HepG2 (cell line): ENCODE measurements at regions of chr17 and their contacts with region 1.

Region 1: GRCh38 chr17:59619293-59620063 is at the start of gene CLTC:
- DNase-seq: peak; percentile 97
- ATAC-seq: peak; percentile 95
- H3K4me3 ChIP-seq: peak within 1 kb of the TSS; percentile 94 to 99 (median 94)
- H3K27ac ChIP-seq: peak within 1 kb of the TSS; percentile 97
- H3K4me1 ChIP-seq: peaks cover 47% of the 10 kb centered on the region
- H3K27me3 ChIP-seq: no peaks in the 10 kb centered on the region; a peak in 2 of 5 replicates
- CTCF ChIP-seq: peak; percentile 21; the same call in 1 of the 2 replicates
- EP300 ChIP-seq: peak; percentile 64 to 84
- POLR2A ChIP-seq: peak; percentile 78 to 97
- RAD21 ChIP-seq: peak; percentile 44
- total RNA-seq, gene CLTC: 283 and 643 TPM in 2 replicates

Region 2: GRCh38 chr17:59199398-59199797 is 420.1 kb before region 1 on chr17:
- CTCF ChIA-PET with region 1: no interaction called
- POLR2A ChIA-PET with region 1: no interaction called
- in situ Hi-C with region 1: no loop called
- intact Hi-C with region 1: no loop called
- DNase-seq: no peak
- ATAC-seq: no peak
- H3K4me3 ChIP-seq: no peak overlapping the region
- H3K27ac ChIP-seq: no peak overlapping the region
- H3K4me1 ChIP-seq: no peaks in the 10 kb centered on the region
- H3K27me3 ChIP-seq: no peaks in the 10 kb centered on the region
- CTCF ChIP-seq: no peak
- EP300 ChIP-seq: no peak
- POLR2A ChIP-seq: no peak
- RAD21 ChIP-seq: no peak

Region 3: DNA sequence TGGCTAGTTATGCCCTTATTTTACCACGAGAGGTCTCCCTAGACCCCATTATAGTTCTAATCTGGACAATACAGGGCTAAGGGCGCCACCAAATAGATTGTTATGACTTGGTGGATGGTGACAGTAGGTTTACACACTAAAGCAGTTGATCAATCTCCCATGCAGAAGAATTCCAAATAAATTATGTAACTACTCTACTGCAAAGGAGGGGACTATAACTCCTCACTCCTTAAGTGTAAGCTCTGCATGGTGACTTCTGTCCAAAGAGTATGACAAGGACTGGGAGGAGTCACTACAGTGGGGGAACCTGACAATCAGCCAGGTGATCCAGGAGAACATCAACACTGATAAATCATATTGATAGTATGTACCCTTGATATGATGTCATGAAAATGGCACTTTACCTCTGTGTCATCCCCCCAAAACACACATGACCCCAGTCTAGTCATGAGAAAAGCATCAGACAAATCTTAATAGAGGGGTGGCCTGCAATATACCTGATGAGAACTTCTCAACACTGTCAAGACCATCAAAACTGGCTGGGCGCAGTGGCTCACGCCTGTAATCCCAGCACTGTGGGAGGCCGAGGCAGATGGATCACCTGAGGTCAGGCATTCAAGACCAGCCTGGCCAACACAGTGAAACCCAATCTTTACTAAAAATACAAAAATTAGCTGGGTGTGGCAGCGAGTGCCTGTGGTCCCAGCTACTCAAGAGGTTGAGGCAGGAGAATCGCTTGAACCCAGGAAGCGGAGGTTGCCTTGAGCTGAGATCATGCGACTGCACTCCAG is 308.2 kb before region 1 on chr17:
- CTCF ChIA-PET with region 1: no interaction called
- POLR2A ChIA-PET with region 1: interaction called, 10 read pairs
- in situ Hi-C with region 1: no loop called
- intact Hi-C with region 1: no loop called
- DNase-seq: peak; percentile 79
- ATAC-seq: peak; percentile 89
- H3K4me3 ChIP-seq: no peak overlapping the region
- H3K27ac ChIP-seq: no peak overlapping the region
- H3K4me1 ChIP-seq: peaks cover 31% of the 10 kb centered on the region
- H3K27me3 ChIP-seq: no peaks in the 10 kb centered on the region; a peak in 1 of 5 replicates
- CTCF ChIP-seq: peak; percentile 95
- EP300 ChIP-seq: 0 out of 4 replicates have a peak, but pooled peaks of 1 of the 2 experiments have one; percentile 14
- POLR2A ChIP-seq: no peak
- RAD21 ChIP-seq: peak; percentile 95

Region 4: DNA sequence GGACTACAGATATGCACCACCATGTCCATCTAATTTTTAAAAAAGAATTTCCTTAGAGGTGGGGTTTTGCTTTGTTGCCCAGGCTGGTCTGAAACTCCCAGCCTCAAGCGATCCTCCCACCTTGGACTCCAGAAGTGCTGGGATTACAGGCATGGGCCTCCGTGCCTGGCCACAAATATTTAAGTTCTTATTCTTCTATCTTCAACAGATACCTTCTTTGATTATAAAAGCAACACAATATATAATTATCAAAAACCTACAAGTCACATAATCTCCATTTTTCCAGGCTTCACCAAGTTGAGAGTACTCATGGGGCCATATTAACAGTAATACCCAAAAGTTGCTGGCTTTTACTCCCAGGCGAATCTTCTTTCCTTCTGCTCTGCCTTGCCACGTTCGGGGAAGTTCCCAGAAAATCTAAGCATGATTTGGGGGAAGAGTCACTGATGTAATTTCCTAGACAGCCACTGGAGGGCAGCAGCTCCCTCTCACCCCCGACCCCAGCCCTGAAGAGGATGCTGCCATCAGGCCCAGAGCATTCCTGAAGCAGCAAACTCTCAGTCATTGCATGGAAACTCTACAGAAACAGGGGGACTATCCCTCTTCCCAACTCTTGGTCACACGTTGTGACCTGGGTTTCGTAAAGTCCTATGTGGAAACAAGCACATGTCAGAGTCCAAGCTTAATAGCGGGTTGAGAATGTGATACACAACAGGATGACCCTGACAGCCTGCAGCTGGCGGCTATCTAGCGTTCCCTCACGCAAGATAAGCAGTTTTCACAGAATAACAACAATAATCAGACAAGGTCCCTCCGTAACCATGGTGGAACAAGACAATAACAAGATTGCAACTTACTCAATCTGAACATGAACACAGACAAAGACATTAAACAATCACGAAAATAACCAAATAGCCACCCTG is 98.0 kb before region 1 on chr17:
- CTCF ChIA-PET with region 1: no interaction called
- POLR2A ChIA-PET with region 1: interaction called, 3 read pairs
- in situ Hi-C with region 1: no loop called
- intact Hi-C with region 1: loop called (anchors 5 kb)
- DNase-seq: peak; percentile 74
- ATAC-seq: peak; percentile 97
- H3K4me3 ChIP-seq: peak overlapping the region in 2 of 3 experiments; percentile 16 to 35; a peak in 4 of 6 replicates
- H3K27ac ChIP-seq: peak overlapping the region; percentile 34
- H3K4me1 ChIP-seq: peaks cover 52% of the 10 kb centered on the region
- H3K27me3 ChIP-seq: no peaks in the 10 kb centered on the region
- CTCF ChIP-seq: peak; percentile 97
- EP300 ChIP-seq: peak in 1 of 2 experiments; percentile 61; a peak in 2 of 4 replicates
- POLR2A ChIP-seq: no peak
- RAD21 ChIP-seq: peak; percentile 88

Region 5: DNA sequence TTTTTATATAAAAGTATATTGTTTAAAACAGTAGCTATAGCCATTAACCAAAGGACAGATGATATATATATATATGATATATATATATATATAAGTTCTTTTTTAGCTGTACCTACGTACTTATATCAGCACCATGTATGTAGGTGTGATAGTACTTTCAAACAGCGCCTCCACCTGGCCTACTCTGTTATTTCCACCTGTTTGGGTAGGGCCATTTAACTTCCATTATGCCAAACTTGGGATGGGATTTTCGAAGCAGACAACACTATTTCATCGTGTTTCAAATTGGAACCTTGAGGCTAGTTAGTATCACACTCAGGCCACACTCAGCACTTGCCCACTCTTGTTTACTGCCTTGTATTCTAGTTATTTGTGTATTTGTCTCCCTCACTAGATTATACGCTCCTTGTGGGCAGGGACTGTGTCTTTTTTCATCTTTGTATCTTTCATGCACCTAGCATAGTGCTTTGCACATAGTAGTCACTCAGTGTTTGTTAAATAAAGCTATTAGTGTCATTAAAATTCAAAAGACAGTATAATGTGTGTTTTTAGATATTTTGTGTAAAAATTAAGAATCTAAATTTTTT is 11.6 kb before region 1 on chr17:
- CTCF ChIA-PET with region 1: no interaction called
- POLR2A ChIA-PET with region 1: interaction called, 15 read pairs
- in situ Hi-C with region 1: no loop called
- intact Hi-C with region 1: no loop called
- DNase-seq: peak; percentile 30
- ATAC-seq: peak; percentile 54; the same call in 2 of the 3 replicates
- H3K4me3 ChIP-seq: no peak overlapping the region
- H3K27ac ChIP-seq: no peak overlapping the region
- H3K4me1 ChIP-seq: no peaks in the 10 kb centered on the region
- H3K27me3 ChIP-seq: no peaks in the 10 kb centered on the region
- CTCF ChIP-seq: peak; percentile 54
- EP300 ChIP-seq: no peak
- POLR2A ChIP-seq: no peak
- RAD21 ChIP-seq: no peak

Region 6: GRCh38 chr17:59707114-59707970 is 87.9 kb after region 1 on chr17 and contains the starts of genes PTRH2 and VMP1:
- CTCF ChIA-PET with region 1: no interaction called
- POLR2A ChIA-PET with region 1: interaction called, 49 read pairs
- in situ Hi-C with region 1: no loop called
- intact Hi-C with region 1: no loop called
- DNase-seq: peak; percentile 100
- ATAC-seq: peak; percentile 96
- H3K4me3 ChIP-seq: peak within 1 kb of the TSS; percentile 83 to 98 (median 91)
- H3K27ac ChIP-seq: peak within 1 kb of the TSS; percentile 94
- H3K4me1 ChIP-seq: peaks cover 75% of the 10 kb centered on the region
- H3K27me3 ChIP-seq: peaks cover 0 to 5% of the 10 kb centered on the region in 2 experiments; a peak in 1 of 5 replicates
- CTCF ChIP-seq: no peak
- EP300 ChIP-seq: peak; percentile 1 to 28; a peak in 2 of 4 replicates
- POLR2A ChIP-seq: peak; percentile 91 to 99
- RAD21 ChIP-seq: no peak; the same call in 1 of the 2 replicates
- total RNA-seq, gene PTRH2: 48.7 and 67.7 TPM in 2 replicates
- total RNA-seq, gene VMP1: 80.3 and 186 TPM in 2 replicates